ENCODE measurements at regions of chr13 and their contacts with region 1.

Region 1: DNA sequence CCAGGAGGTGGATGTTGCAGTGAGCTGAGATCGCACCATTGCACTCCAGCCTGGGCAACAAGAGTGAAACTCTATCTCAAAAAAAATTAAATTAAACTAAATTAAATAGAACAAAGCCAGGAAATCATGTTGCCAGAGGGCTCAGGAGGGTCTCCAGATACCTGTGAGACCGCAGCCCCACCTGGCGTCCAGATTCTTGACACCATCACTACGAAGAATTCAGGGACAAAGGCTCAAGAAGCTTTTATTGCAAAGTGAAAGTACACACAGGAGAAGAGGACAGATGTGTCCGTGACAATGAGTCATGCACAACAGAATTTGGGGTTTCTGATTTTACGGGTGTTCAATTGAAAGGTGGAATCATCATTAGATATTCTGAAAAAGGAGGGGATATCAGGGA is 76.6 kb downstream of the STOML3 start:
- DNase-seq: no peak
- H3K4me3 Mint-ChIP-seq: no peak overlapping the region
- H3K27ac Mint-ChIP-seq: no peak overlapping the region
- H3K4me1 Mint-ChIP-seq: no peaks in the 10 kb centered on the region
- H3K27me3 Mint-ChIP-seq: peaks cover 38% of the 10 kb centered on the region
- CTCF ChIP-seq: no peak

Region 2: DNA sequence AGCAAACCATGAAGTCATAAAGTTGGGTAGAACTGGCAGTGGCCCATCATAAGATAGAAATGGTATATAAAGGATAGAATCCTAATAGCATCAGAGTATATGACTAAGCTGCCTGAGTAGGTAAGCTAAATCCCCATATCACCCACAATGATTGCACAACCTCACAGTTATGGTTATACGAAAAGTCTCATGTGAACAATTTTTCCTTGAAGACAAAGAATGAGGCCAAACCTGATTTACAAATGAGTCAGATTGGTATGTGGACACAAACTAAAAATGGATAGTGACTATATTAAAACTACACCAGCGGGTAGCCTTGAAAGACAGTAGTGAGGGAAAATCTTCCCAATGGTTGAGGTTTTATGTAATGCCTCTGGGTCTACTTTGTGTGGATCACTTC is 605.3 kb before region 1 on chr13:
- CTCF ChIA-PET with region 1: no interaction called
- POLR2A ChIA-PET with region 1: no interaction called
- intact Hi-C with region 1: loop called (anchors 5 kb)
- DNase-seq: peak; percentile 83
- H3K4me3 Mint-ChIP-seq: no peak overlapping the region
- H3K27ac Mint-ChIP-seq: no peak overlapping the region
- H3K4me1 Mint-ChIP-seq: peaks cover 7% of the 10 kb centered on the region
- H3K27me3 Mint-ChIP-seq: no peaks in the 10 kb centered on the region
- CTCF ChIP-seq: no peak

Region 3: GRCh38 chr13:38686577-38687245 is 227.4 kb before region 1 on chr13 and contains the start of gene FREM2:
- CTCF ChIA-PET with region 1: interaction called, 10 read pairs
- POLR2A ChIA-PET with region 1: interaction called, 6 read pairs
- intact Hi-C with region 1: loop called (anchors 2 kb)
- DNase-seq: peak; percentile 73
- H3K4me3 Mint-ChIP-seq: peak within 1 kb of the TSS; percentile 71
- H3K27ac Mint-ChIP-seq: no peak within 1 kb of the TSS
- H3K4me1 Mint-ChIP-seq: peaks cover 7% of the 10 kb centered on the region
- H3K27me3 Mint-ChIP-seq: no peaks in the 10 kb centered on the region
- CTCF ChIP-seq: no peak
- total RNA-seq, gene FREM2: not detected in 2 replicates

Region 4: GRCh38 chr13:38866649-38867048 is 47.4 kb before region 1 on chr13:
- CTCF ChIA-PET with region 1: interaction called, 7 read pairs
- POLR2A ChIA-PET with region 1: no interaction called
- intact Hi-C with region 1: loop called (anchors 2 kb)
- DNase-seq: peak; percentile 13
- H3K4me3 Mint-ChIP-seq: no peak overlapping the region
- H3K27ac Mint-ChIP-seq: no peak overlapping the region
- H3K4me1 Mint-ChIP-seq: no peaks in the 10 kb centered on the region
- H3K27me3 Mint-ChIP-seq: peaks cover 40% of the 10 kb centered on the region
- CTCF ChIP-seq: peak; percentile 11

Region 5: DNA sequence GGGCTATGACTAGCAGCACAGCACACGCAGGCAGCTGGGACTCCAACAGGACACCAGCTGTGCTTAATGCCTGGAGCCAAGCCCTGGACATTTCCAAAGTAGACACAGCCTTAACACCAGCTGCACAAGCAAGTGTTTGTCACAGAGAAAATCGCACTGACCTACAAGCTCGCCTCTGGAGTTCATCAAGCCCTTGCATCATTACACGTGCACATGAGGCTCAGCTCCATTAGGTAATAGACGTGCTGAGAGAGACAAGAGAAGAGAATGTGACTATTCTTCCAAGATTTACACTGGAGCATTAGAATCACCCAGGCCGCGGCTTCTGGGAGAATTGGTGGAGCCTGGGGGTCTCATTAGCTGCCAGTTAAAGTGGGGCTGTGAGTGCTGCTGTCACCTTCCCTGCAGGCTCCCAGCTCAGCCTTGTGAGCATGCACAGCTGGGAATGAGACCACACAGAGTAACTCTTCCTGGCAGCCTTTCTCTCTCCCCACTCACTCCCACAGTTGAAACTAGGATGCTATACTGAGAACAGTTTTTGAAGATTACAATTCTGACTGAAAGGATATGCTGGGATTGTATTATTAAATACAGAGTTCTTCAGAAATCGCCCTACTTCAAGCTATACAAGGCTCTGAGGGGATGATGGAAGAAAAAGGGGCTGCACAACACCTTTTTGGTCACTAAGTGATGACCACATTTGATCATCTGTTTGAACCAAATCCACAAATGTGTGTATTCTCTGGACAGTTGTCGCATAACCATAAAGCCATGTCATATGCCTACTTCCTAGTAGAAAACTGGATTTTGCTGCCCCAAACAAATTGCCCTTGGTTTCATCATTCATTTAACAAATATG is 66.0 kb after region 1 on chr13:
- CTCF ChIA-PET with region 1: no interaction called
- POLR2A ChIA-PET with region 1: no interaction called
- intact Hi-C with region 1: no loop called
- DNase-seq: no peak
- H3K4me3 Mint-ChIP-seq: no peak overlapping the region
- H3K27ac Mint-ChIP-seq: no peak overlapping the region
- H3K4me1 Mint-ChIP-seq: no peaks in the 10 kb centered on the region
- H3K27me3 Mint-ChIP-seq: no peaks in the 10 kb centered on the region
- CTCF ChIP-seq: no peak

Region 6: GRCh38 chr13:39016787-39017186 is 102.7 kb after region 1 on chr13:
- CTCF ChIA-PET with region 1: interaction called, 4 read pairs
- POLR2A ChIA-PET with region 1: interaction called, 3 read pairs
- intact Hi-C with region 1: loop called (anchors 1 kb)
- DNase-seq: peak; percentile 52
- H3K4me3 Mint-ChIP-seq: no peak overlapping the region
- H3K27ac Mint-ChIP-seq: no peak overlapping the region
- H3K4me1 Mint-ChIP-seq: no peaks in the 10 kb centered on the region
- H3K27me3 Mint-ChIP-seq: no peaks in the 10 kb centered on the region
- CTCF ChIP-seq: peak; percentile 41

Region 7: GRCh38 chr13:39815345-39816111 is 901.5 kb after region 1 on chr13:
- CTCF ChIA-PET with region 1: no interaction called
- POLR2A ChIA-PET with region 1: no interaction called
- intact Hi-C with region 1: no loop called
- DNase-seq: peak; percentile 22
- H3K4me3 Mint-ChIP-seq: no peak overlapping the region
- H3K27ac Mint-ChIP-seq: no peak overlapping the region
- H3K4me1 Mint-ChIP-seq: peaks cover 7% of the 10 kb centered on the region
- H3K27me3 Mint-ChIP-seq: no peaks in the 10 kb centered on the region
- CTCF ChIP-seq: no peak

Measured in MCF 10A (cell line).